ENCODE measurements at regions of chr5 and their contacts with region 1.

Region 1: DNA sequence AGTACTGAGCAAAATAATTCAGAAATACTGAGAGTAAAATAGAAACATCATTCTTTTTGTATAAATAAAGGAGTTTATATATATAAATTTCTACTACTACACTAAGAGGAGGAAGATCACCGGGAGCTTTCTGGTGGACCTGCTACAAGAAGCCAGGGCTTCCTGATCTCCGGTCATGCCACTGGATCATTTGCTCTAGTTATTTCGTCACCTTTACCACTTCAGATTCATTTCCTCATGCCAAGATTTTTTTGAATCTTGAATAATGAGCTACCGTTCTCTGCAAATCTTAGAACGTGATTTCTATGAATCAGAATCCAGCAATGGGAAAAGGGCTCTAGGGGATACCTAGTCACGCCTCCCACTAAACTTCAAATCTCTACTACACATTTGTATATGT is 51.9 kb upstream of the TBC1D9B start:
- DNase-seq: peak; percentile 55 to 74 (median 72)
- H3K4me3 ChIP-seq: no peak overlapping the region
- H3K4me3 Mint-ChIP-seq: no peak overlapping the region
- H3K27ac ChIP-seq: peak overlapping the region; percentile 22 to 70
- H3K27ac Mint-ChIP-seq: peak overlapping the region in 5 of 7 donors; percentile 13 to 77 (median 39)
- H3K4me1 ChIP-seq: peaks cover 13 to 17% of the 10 kb centered on the region in 2 donors
- H3K4me1 Mint-ChIP-seq: peaks cover 15% of the 10 kb centered on the region
- H3K27me3 ChIP-seq: no peaks in the 10 kb centered on the region
- H3K27me3 Mint-ChIP-seq: no peaks in the 10 kb centered on the region
- CTCF ChIP-seq: no peak

Region 2: GRCh38 chr5:179914032-179914755 is 45.4 kb before region 1 on chr5:
- intact Hi-C with region 1: loop called in 1 of 2 experiments (anchors 5 kb)
- DNase-seq: peak; percentile 91 to 94 (median 92)
- H3K4me3 ChIP-seq: peak overlapping the region in 1 of 3 experiments; percentile 51
- H3K4me3 Mint-ChIP-seq: peak overlapping the region in 1 of 2 donors; percentile 80
- H3K27ac ChIP-seq: peak overlapping the region; percentile 82 to 94
- H3K27ac Mint-ChIP-seq: peak overlapping the region; percentile 91 to 96 (median 94)
- H3K4me1 ChIP-seq: peaks cover 29 to 42% of the 10 kb centered on the region in 2 donors
- H3K4me1 Mint-ChIP-seq: peaks cover 34% of the 10 kb centered on the region
- H3K27me3 ChIP-seq: no peaks in the 10 kb centered on the region
- H3K27me3 Mint-ChIP-seq: peaks cover 0 to 4% (median 0%) of the 10 kb centered on the region in 3 donors
- CTCF ChIP-seq: no peak

Measured in CD14-positive monocyte (primary cell).